ENCODE measurements at regions of chr9 and their contacts with region 1.

Region 1: GRCh38 chr9:127319366-127320114 is 55.0 kb downstream of the GARNL3 start:
- DNase-seq: no peak
- ATAC-seq: no peak
- H3K4me3 ChIP-seq: no peak overlapping the region
- H3K27ac ChIP-seq: no peak overlapping the region
- H3K4me1 ChIP-seq: no peaks in the 10 kb centered on the region
- H3K27me3 ChIP-seq: peaks cover 6 to 8% of the 10 kb centered on the region in 2 experiments; a peak in 3 of 5 replicates
- CTCF ChIP-seq: no peak
- EP300 ChIP-seq: no peak
- POLR2A ChIP-seq: no peak
- RAD21 ChIP-seq: no peak

Region 2: GRCh38 chr9:127083138-127083980 is 236.2 kb before region 1 on chr9:
- CTCF ChIA-PET with region 1: no interaction called
- POLR2A ChIA-PET with region 1: no interaction called
- in situ Hi-C with region 1: loop called (anchors 10 kb)
- intact Hi-C with region 1: no loop called
- DNase-seq: no peak
- ATAC-seq: no peak
- H3K4me3 ChIP-seq: no peak overlapping the region
- H3K27ac ChIP-seq: no peak overlapping the region
- H3K4me1 ChIP-seq: no peaks in the 10 kb centered on the region; a peak in 1 of 5 replicates
- H3K27me3 ChIP-seq: peaks cover 9 to 41% of the 10 kb centered on the region in 2 experiments; a peak in 4 of 5 replicates
- CTCF ChIP-seq: no peak
- EP300 ChIP-seq: no peak
- POLR2A ChIP-seq: no peak
- RAD21 ChIP-seq: no peak

Region 3: DNA sequence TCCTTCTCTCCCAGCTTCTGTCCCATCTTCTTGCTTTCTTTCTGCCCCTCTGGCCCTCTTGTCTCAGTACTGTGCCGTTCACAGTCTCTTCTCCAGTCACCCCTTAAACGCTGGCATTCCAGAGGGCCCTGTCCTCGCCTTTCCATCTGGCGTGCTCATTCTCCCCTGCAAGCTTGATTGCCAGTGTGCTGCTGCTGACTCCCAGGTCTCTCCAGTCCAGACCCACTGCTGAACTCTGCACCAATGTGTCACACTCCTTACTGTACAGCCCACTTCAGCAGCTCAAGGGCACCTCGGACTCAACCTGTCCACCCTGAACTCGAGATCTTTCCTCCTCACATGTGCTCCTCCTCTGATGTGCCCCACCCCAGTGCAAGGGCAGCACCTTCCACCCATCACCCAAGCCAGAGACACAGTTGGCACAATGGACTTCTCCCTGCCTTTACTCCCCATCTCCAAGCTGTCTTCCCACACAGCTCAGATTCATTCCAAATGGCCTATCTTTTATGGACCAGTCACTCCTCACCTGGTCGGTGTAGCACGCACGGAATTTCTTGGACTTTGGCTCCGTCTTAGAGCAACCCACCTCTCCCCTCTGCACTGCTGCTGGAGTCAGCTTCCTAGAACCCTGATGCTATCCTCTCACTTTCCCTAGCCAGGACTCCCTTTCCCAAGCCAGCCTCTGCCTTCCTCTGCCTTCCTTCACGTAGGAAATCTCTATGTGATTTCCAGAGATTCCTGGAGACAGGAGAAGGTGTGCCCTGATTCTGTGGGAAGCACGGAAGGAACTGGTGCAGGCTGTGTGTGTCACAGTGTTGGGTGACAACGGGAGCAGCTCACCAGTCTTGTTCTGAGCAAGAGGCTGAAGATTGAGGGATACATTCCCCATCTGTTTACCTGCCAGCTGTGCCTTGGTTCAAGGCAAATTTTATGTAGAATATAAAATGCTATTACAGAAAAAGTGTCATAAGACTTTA is 51.4 kb after region 1 on chr9:
- CTCF ChIA-PET with region 1: no interaction called
- POLR2A ChIA-PET with region 1: no interaction called
- in situ Hi-C with region 1: no loop called
- intact Hi-C with region 1: no loop called
- DNase-seq: no peak
- ATAC-seq: no peak
- H3K4me3 ChIP-seq: no peak overlapping the region
- H3K27ac ChIP-seq: no peak overlapping the region
- H3K4me1 ChIP-seq: no peaks in the 10 kb centered on the region; a peak in 1 of 5 replicates
- H3K27me3 ChIP-seq: peaks cover 30 to 53% of the 10 kb centered on the region in 2 experiments
- CTCF ChIP-seq: no peak
- EP300 ChIP-seq: no peak
- POLR2A ChIP-seq: no peak
- RAD21 ChIP-seq: no peak